ENCODE measurements at regions of chr1 and their contacts with region 1.

Region 1: GRCh38 chr1:33455539-33456501 is 16.6 kb upstream of the ZSCAN20 start:
- DNase-seq: peak; percentile 80
- ATAC-seq: peak; percentile 92
- H3K4me3 ChIP-seq: no peak overlapping the region
- H3K27ac ChIP-seq: no peak overlapping the region; the same call in 1 of the 2 replicates
- H3K4me1 ChIP-seq: peaks cover 40 to 59% of the 10 kb centered on the region in 2 experiments
- H3K27me3 ChIP-seq: no peaks in the 10 kb centered on the region
- CTCF ChIP-seq: peak; percentile 84 to 92 (median 84)
- POLR2A ChIP-seq: no peak
- RAD21 ChIP-seq: peak; percentile 98

Region 2: DNA sequence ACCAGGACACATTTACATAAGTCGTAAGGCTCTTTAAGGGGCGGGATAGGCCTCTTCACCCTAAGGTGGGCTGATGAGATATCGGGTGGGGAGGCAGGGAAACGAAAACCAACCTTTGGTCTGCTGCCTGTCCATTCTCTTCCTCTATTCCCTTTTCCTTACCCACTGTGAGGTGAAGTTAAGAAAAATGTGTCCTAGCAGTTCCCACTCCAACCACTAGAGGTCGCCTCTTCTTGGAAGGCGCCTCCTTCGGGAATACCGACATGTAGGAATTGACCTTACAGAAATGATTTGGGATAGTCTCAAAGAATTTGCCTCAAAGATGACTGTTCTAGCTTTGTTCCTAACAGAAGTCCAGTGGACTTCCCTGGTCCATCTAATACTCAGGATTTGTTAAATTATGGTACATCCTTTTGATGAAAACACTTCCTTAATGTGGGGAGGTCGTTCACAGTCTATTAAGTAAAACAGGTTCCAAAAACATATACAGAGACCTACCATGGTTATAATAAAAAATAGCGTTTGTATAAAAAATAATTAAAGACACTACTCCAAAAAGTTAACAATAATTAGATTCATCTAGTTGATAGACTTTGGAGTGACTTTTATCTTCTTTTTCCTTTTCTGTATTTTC is 360.7 kb before region 1 on chr1:
- CTCF ChIA-PET with region 1: interaction called, 3 read pairs
- POLR2A ChIA-PET with region 1: no interaction called
- RAD21 ChIA-PET with region 1: no interaction called
- intact Hi-C with region 1: loop called (anchors 5 kb)
- DNase-seq: peak; percentile 60
- ATAC-seq: no peak
- H3K4me3 ChIP-seq: no peak overlapping the region
- H3K27ac ChIP-seq: no peak overlapping the region
- H3K4me1 ChIP-seq: peaks cover 17 to 38% of the 10 kb centered on the region in 2 experiments
- H3K27me3 ChIP-seq: no peaks in the 10 kb centered on the region
- CTCF ChIP-seq: peak; percentile 92 to 99 (median 97)
- POLR2A ChIP-seq: no peak
- RAD21 ChIP-seq: peak; percentile 74

Region 3: DNA sequence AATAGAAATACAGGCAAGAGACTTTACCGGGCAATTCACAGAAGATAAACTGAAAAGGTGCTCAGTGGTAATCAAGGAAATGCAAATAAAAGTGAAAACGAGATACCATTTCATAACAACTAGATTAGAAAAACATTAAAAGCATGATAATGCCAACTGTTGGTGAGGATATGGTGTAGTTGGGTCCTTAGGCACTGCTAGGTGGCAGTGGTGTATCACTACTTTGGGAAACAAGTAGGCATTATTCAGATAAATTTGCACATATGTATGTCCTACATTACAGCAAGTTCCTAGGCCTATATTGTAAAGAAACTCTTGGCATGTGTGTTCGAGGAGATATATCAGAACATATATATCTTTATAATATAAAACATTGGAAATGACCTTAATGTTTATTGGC is 343.9 kb before region 1 on chr1:
- CTCF ChIA-PET with region 1: no interaction called
- POLR2A ChIA-PET with region 1: no interaction called
- RAD21 ChIA-PET with region 1: no interaction called
- intact Hi-C with region 1: loop called (anchors 5 kb)
- DNase-seq: no peak
- ATAC-seq: peak; percentile 69
- H3K4me3 ChIP-seq: no peak overlapping the region
- H3K27ac ChIP-seq: no peak overlapping the region
- H3K4me1 ChIP-seq: no peaks in the 10 kb centered on the region
- H3K27me3 ChIP-seq: no peaks in the 10 kb centered on the region
- CTCF ChIP-seq: peak; percentile 28 to 47 (median 35); a peak in 4 of 6 replicates
- POLR2A ChIP-seq: no peak
- RAD21 ChIP-seq: peak; percentile 68

Region 4: GRCh38 chr1:33219881-33220661 is 235.7 kb before region 1 on chr1:
- CTCF ChIA-PET with region 1: no interaction called
- POLR2A ChIA-PET with region 1: no interaction called
- RAD21 ChIA-PET with region 1: no interaction called
- intact Hi-C with region 1: loop called (anchors 5 kb)
- DNase-seq: peak; percentile 60
- ATAC-seq: peak; percentile 69
- H3K4me3 ChIP-seq: peak overlapping the region in 1 of 2 experiments; percentile 42; a peak in 2 of 4 replicates
- H3K27ac ChIP-seq: peak overlapping the region; percentile 82
- H3K4me1 ChIP-seq: peaks cover 30 to 41% of the 10 kb centered on the region in 2 experiments
- H3K27me3 ChIP-seq: no peaks in the 10 kb centered on the region
- CTCF ChIP-seq: no peak
- POLR2A ChIP-seq: no peak
- RAD21 ChIP-seq: peak; percentile 33; the same call in 1 of the 2 replicates

Region 5: DNA sequence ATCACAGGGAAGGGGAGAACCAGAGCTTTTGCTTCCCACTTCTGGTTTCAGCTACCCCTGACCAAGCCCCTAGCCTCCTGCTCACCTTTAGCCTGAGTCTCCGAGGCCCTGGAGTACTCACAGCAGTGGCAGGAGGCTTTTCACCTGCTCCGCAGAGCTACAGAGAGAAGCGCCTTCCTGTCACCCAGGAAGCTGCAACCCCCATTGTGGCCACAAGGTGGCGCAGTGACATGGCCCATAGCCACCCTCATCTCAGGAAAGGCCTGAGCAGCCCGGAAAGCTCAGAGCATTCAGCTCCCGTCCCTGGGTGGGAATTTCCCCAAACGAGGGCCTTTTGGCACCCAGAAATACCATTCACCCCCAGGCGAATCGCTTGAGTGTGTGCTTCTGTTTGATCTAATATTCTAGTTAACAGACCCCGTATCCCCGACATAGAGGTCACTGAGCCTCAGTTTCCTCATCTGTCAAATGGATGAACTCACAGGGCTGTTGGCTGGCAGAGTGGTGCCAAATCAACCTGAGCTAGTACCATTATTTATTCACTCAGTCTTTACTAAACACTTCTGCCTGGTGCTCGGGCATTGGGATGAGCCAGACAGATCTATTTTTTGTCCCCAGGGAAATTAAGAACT is 160.3 kb before region 1 on chr1:
- CTCF ChIA-PET with region 1: interaction called, 24 read pairs
- POLR2A ChIA-PET with region 1: no interaction called
- RAD21 ChIA-PET with region 1: interaction called in 1 of 2 experiments, 10 read pairs
- intact Hi-C with region 1: loop called (anchors 5 kb)
- DNase-seq: peak; percentile 47
- ATAC-seq: peak; percentile 86
- H3K4me3 ChIP-seq: no peak overlapping the region
- H3K27ac ChIP-seq: no peak overlapping the region
- H3K4me1 ChIP-seq: peaks cover 0 to 8% of the 10 kb centered on the region in 2 experiments; a peak in 2 of 4 replicates
- H3K27me3 ChIP-seq: no peaks in the 10 kb centered on the region
- CTCF ChIP-seq: peak; percentile 89 to 97 (median 95)
- POLR2A ChIP-seq: no peak
- RAD21 ChIP-seq: peak; percentile 90

Region 6: DNA sequence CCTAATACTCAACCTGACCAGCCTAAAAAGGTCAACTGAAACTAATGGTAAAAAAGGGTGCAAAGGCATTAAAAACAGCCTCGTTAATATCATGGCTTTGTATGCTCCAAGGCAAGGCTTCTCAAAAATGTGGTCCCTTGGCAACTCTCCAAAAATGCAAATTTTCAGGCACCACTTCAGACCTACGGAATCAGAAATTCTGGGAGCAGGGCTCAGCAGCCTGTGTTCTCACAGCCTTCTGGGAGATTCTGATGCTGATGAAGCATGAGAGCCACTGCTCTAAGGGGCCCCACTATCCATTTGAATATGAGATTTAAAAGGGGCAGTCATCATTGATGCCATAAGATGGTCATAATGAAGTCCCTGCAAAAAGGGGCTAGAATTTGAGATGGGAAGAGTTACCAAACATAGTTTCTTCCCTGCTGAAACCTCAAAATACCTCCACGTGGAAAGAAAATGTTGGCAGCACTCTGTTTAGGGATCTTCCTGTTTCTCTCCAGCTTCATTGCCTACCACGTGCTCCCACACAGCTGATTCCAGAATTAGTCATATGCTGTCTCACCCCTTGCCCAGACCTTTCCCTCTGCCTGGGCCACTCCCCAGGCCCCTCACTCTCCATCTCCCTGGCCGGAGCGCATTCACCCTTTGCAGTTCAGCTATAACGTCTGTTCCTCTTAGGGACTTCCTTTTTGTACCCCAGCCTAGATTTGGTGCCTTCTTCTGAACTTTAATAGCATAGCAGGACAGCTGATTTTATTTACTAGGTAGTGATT is 71.6 kb before region 1 on chr1:
- CTCF ChIA-PET with region 1: interaction called, 4 read pairs
- POLR2A ChIA-PET with region 1: interaction called, 3 read pairs
- RAD21 ChIA-PET with region 1: interaction called in 1 of 2 experiments, 3 read pairs
- intact Hi-C with region 1: loop called (anchors 5 kb)
- DNase-seq: no peak
- ATAC-seq: peak; percentile 53
- H3K4me3 ChIP-seq: no peak overlapping the region
- H3K27ac ChIP-seq: 0 out of 2 replicates have a peak overlapping the region, but pooled peaks have one; percentile 9
- H3K4me1 ChIP-seq: peaks cover 14 to 73% of the 10 kb centered on the region in 2 experiments
- H3K27me3 ChIP-seq: no peaks in the 10 kb centered on the region
- CTCF ChIP-seq: no peak
- POLR2A ChIP-seq: no peak
- RAD21 ChIP-seq: no peak

Region 7: GRCh38 chr1:33430692-33431593 is 24.9 kb before region 1 on chr1 and contains the start of gene PHC2:
- CTCF ChIA-PET with region 1: interaction called, 12 read pairs
- POLR2A ChIA-PET with region 1: no interaction called
- RAD21 ChIA-PET with region 1: interaction called, 5 to 10 read pairs
- intact Hi-C with region 1: no loop called
- DNase-seq: peak; percentile 95
- ATAC-seq: peak; percentile 85
- H3K4me3 ChIP-seq: peak within 1 kb of the TSS; percentile 76 to 92
- H3K27ac ChIP-seq: peak within 1 kb of the TSS; percentile 84
- H3K4me1 ChIP-seq: peaks cover 68 to 86% of the 10 kb centered on the region in 2 experiments
- H3K27me3 ChIP-seq: no peaks in the 10 kb centered on the region
- CTCF ChIP-seq: peak in 1 of 3 experiments; percentile 24; a peak in 1 of 6 replicates
- POLR2A ChIP-seq: no peak
- RAD21 ChIP-seq: no peak
- total RNA-seq, gene PHC2: 176 TPM

Region 8: GRCh38 chr1:33500547-33500946 is 44.7 kb after region 1 on chr1:
- CTCF ChIA-PET with region 1: no interaction called
- POLR2A ChIA-PET with region 1: no interaction called
- RAD21 ChIA-PET with region 1: no interaction called
- intact Hi-C with region 1: no loop called
- DNase-seq: no peak
- ATAC-seq: peak; percentile 73
- H3K4me3 ChIP-seq: no peak overlapping the region
- H3K27ac ChIP-seq: no peak overlapping the region
- H3K4me1 ChIP-seq: no peaks in the 10 kb centered on the region
- H3K27me3 ChIP-seq: no peaks in the 10 kb centered on the region
- CTCF ChIP-seq: peak in 2 of 3 experiments; percentile 56 to 61; a peak in 4 of 6 replicates
- POLR2A ChIP-seq: no peak
- RAD21 ChIP-seq: no peak

Region 9: DNA sequence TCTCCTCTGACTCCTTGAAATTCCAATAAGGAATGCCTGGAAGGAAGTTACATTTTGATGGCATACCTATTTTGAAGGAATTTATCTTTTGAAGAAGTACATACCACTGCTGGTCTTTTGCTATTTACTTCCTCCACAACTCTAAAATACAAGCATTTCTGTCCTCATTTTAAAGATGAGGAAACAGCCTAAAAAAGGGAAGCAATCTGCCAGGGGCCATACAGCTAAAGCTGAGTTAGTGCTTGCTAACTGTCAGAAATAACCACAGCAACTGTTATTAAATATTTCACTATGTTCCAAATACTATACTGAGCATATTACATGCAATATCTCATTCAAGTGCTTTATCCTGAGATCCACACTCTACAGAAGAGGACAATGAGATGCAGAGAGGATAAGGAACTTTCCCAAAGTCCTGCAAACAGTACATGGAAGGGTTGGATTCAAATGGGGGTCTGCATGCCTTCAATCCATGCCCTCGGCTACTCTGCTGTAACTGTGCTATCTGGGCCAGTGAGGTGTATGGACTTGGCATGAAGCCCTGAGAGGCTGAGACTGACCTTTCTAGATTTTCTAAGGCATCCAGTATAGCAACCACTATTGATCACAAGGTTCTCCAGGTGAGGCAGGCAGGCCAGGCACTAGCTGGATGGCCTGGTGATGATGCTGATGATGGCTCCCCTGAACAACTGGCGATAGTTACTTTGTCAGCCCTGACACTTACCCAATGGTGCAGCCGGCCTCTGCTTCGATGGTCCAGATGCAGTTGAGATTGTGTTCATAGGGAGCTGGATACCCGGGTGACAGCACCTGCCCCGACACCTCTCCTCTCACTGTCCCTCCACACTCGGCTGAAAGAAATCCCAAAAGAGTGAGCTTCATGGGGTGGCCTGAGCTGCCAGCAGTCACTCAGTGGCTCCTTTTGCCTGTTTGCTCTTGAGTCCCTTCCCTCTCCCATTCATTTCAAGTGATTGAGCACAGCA is 236.7 kb after region 1 on chr1:
- CTCF ChIA-PET with region 1: no interaction called
- POLR2A ChIA-PET with region 1: no interaction called
- RAD21 ChIA-PET with region 1: no interaction called
- intact Hi-C with region 1: no loop called
- DNase-seq: no peak
- ATAC-seq: no peak
- H3K4me3 ChIP-seq: no peak overlapping the region
- H3K27ac ChIP-seq: no peak overlapping the region
- H3K4me1 ChIP-seq: no peaks in the 10 kb centered on the region
- H3K27me3 ChIP-seq: peaks cover 77% of the 10 kb centered on the region
- CTCF ChIP-seq: no peak
- POLR2A ChIP-seq: no peak
- RAD21 ChIP-seq: no peak

Region 10: DNA sequence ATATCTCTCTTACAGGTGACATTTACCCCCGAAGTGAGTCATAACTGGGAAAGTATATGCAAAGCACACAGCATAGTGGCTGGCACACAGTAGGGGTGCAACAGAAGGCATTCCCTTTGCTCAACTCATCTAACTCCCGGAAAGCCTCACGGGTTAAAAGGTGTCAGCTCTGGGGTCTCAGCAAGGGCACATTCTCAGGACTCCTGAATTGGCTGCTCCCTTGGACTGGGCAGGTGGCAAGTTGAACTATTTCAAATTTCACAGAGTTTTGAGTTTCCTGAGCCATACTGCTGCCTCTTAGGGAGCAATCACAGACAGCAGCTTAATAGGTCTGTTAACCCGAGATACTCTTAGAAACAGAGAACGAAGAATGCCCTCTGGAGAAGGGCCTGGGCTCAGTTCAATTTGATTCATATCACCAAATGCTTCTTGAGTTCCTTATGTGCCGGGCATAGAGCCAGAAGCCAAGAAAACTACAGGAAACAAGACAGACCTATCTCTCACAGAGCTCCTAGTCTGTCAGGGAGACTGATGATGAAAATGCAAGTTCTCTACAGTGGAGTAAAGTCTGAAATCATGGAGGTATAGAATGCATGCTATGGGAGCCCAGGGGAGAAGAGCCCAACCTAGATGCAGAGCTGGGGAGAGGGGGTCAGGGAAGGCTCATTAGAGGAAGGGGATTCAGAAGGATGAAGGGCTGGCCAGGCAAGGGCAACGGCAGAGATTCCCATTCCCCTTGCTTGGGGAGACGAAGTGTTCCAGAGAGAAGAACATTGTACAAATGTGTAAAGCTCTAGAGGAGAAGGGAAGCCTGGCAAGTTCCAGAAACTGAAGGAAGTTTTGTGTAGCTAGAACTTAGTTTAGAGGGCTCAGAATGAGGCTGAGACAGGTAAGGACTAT is 264.2 kb after region 1 on chr1:
- CTCF ChIA-PET with region 1: no interaction called
- POLR2A ChIA-PET with region 1: no interaction called
- RAD21 ChIA-PET with region 1: no interaction called
- intact Hi-C with region 1: no loop called
- DNase-seq: no peak
- ATAC-seq: no peak
- H3K4me3 ChIP-seq: no peak overlapping the region
- H3K27ac ChIP-seq: no peak overlapping the region
- H3K4me1 ChIP-seq: no peaks in the 10 kb centered on the region
- H3K27me3 ChIP-seq: peaks cover 56% of the 10 kb centered on the region
- CTCF ChIP-seq: no peak
- POLR2A ChIP-seq: no peak
- RAD21 ChIP-seq: no peak

Region 11: GRCh38 chr1:33876970-33877650 is 421.3 kb after region 1 on chr1:
- CTCF ChIA-PET with region 1: no interaction called
- POLR2A ChIA-PET with region 1: no interaction called
- RAD21 ChIA-PET with region 1: no interaction called
- intact Hi-C with region 1: no loop called
- DNase-seq: no peak
- ATAC-seq: no peak
- H3K4me3 ChIP-seq: no peak overlapping the region
- H3K27ac ChIP-seq: no peak overlapping the region
- H3K4me1 ChIP-seq: no peaks in the 10 kb centered on the region
- H3K27me3 ChIP-seq: peaks cover 35% of the 10 kb centered on the region; the same call in 1 of the 2 replicates
- CTCF ChIP-seq: no peak
- POLR2A ChIP-seq: no peak
- RAD21 ChIP-seq: no peak

Measured in HCT116 (cell line).